ENCODE measurements at regions of chr10 and their contacts with region 1.

Region 1: GRCh38 chr10:96043033-96043932 is at the start of gene CCNJ:
- DNase-seq: peak; percentile 82 to 90
- ATAC-seq: peak; percentile 89 to 90 (median 90)
- H3K4me3 ChIP-seq: peak within 1 kb of the TSS; percentile 64
- H3K4me3 Mint-ChIP-seq: peak within 1 kb of the TSS; percentile 90
- H3K27ac ChIP-seq: peak within 1 kb of the TSS; percentile 77
- H3K27ac Mint-ChIP-seq: peak within 1 kb of the TSS; percentile 79 to 92
- H3K4me1 ChIP-seq: peaks cover 15% of the 10 kb centered on the region
- H3K4me1 Mint-ChIP-seq: peaks cover 29 to 38% of the 10 kb centered on the region in 2 donors
- H3K27me3 ChIP-seq: no peaks in the 10 kb centered on the region
- H3K27me3 Mint-ChIP-seq: peaks cover 1 to 6% of the 10 kb centered on the region in 2 donors
- CTCF ChIP-seq: no peak
- total RNA-seq, gene CCNJ: 5.9 to 7.1 (median 6.0) TPM

Region 2: GRCh38 chr10:95998255-95998784 is 45.0 kb before region 1 on chr10:
- intact Hi-C with region 1: no loop called
- DNase-seq: no peak
- ATAC-seq: no peak
- H3K4me3 ChIP-seq: no peak overlapping the region
- H3K4me3 Mint-ChIP-seq: no peak overlapping the region
- H3K27ac ChIP-seq: no peak overlapping the region
- H3K27ac Mint-ChIP-seq: no peak overlapping the region
- H3K4me1 ChIP-seq: no peaks in the 10 kb centered on the region
- H3K4me1 Mint-ChIP-seq: no peaks in the 10 kb centered on the region
- H3K27me3 ChIP-seq: no peaks in the 10 kb centered on the region
- H3K27me3 Mint-ChIP-seq: no peaks in the 10 kb centered on the region
- CTCF ChIP-seq: no peak

Region 3: GRCh38 chr10:96089670-96090462 is 46.6 kb after region 1 on chr10:
- intact Hi-C with region 1: loop called (anchors 5 kb)
- DNase-seq: peak; percentile 93 to 98
- ATAC-seq: peak; percentile 92
- H3K4me3 ChIP-seq: peak overlapping the region; percentile 91
- H3K4me3 Mint-ChIP-seq: peak overlapping the region; percentile 93
- H3K27ac ChIP-seq: peak overlapping the region; percentile 97
- H3K27ac Mint-ChIP-seq: peak overlapping the region; percentile 96 to 98
- H3K4me1 ChIP-seq: peaks cover 12% of the 10 kb centered on the region
- H3K4me1 Mint-ChIP-seq: peaks cover 8 to 10% of the 10 kb centered on the region in 2 donors
- H3K27me3 ChIP-seq: peaks cover 16% of the 10 kb centered on the region
- H3K27me3 Mint-ChIP-seq: peaks cover 26 to 32% of the 10 kb centered on the region in 2 donors
- CTCF ChIP-seq: no peak

Region 4: GRCh38 chr10:96129387-96130325 is 86.4 kb after region 1 on chr10 and contains the start of gene ZNF518A:
- intact Hi-C with region 1: loop called (anchors 5 kb)
- DNase-seq: peak; percentile 88 to 97
- ATAC-seq: peak; percentile 85 to 91 (median 85)
- H3K4me3 ChIP-seq: peak within 1 kb of the TSS; percentile 60
- H3K4me3 Mint-ChIP-seq: peak within 1 kb of the TSS; percentile 98
- H3K27ac ChIP-seq: peak within 1 kb of the TSS; percentile 90
- H3K27ac Mint-ChIP-seq: peak within 1 kb of the TSS; percentile 97 to 98
- H3K4me1 ChIP-seq: peaks cover 10% of the 10 kb centered on the region
- H3K4me1 Mint-ChIP-seq: peaks cover 27 to 29% of the 10 kb centered on the region in 2 donors
- H3K27me3 ChIP-seq: peaks cover 30% of the 10 kb centered on the region
- H3K27me3 Mint-ChIP-seq: peaks cover 30 to 36% of the 10 kb centered on the region in 2 donors
- CTCF ChIP-seq: no peak
- total RNA-seq, gene ZNF518A: 17.6 to 34.7 (median 21.8) TPM

Region 5: DNA sequence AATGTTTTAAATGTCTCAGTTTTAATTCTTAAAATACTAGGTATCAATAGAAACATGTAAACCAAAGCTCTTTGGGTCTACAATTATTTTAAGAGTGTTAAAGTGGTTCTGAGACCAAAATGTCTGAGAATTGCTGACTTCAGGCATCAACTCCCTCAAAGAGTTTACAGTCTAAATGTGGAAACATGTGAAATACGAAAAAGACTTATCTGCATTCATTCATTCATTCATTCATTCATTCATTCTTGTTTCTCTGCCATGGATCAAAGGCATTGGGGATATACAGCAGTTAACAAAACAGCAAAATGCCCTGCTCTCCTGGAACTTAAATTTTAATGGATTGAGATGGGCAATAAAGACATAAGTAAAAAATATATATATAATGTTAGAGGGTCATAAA is 158.2 kb after region 1 on chr10:
- intact Hi-C with region 1: no loop called
- DNase-seq: no peak
- ATAC-seq: no peak
- H3K4me3 ChIP-seq: no peak overlapping the region
- H3K4me3 Mint-ChIP-seq: no peak overlapping the region
- H3K27ac ChIP-seq: no peak overlapping the region
- H3K27ac Mint-ChIP-seq: no peak overlapping the region
- H3K4me1 ChIP-seq: no peaks in the 10 kb centered on the region
- H3K4me1 Mint-ChIP-seq: no peaks in the 10 kb centered on the region
- H3K27me3 ChIP-seq: no peaks in the 10 kb centered on the region
- H3K27me3 Mint-ChIP-seq: peaks cover 3 to 15% of the 10 kb centered on the region in 2 donors
- CTCF ChIP-seq: no peak

Region 6: DNA sequence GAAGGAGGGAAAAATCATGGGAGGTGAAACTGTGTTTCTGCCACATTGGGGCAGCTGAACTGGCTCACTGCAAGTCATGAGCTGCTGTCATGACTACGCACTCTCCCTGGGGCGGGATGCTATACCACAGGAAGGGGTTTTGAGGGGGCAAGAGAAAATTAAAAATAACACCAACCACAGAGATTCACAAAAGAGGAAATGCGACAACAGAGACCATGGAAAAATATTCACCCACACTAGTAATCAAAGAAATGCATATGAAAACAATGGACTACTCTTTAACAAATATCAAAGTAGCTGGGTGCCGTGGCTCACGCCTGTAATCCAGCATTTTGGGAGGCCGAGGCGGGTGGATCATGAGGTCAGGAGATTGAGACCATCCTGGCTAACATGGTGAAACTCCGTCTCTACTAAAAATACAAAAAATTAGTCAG is 608.7 kb after region 1 on chr10:
- intact Hi-C with region 1: no loop called
- DNase-seq: peak; percentile 58 to 74
- ATAC-seq: peak; percentile 78 to 88 (median 87)
- H3K4me3 ChIP-seq: no peak overlapping the region
- H3K4me3 Mint-ChIP-seq: peak overlapping the region; percentile 69
- H3K27ac ChIP-seq: peak overlapping the region; percentile 83
- H3K27ac Mint-ChIP-seq: peak overlapping the region; percentile 90 to 93
- H3K4me1 ChIP-seq: peaks cover 79% of the 10 kb centered on the region
- H3K4me1 Mint-ChIP-seq: peaks cover 72 to 78% of the 10 kb centered on the region in 2 donors
- H3K27me3 ChIP-seq: no peaks in the 10 kb centered on the region
- H3K27me3 Mint-ChIP-seq: no peaks in the 10 kb centered on the region
- CTCF ChIP-seq: no peak

Measured in natural killer cell (primary cell).